Activated CD8-positive, alpha-beta T cell treated with anti-CD3 and anti-CD28 coated beads, Interleukin-2, amount 10 ng/mL, durations not matched to agents 7 days and 5 days (primary cell): ENCODE measurements at regions of chr12 and their contacts with region 1.

Region 1: GRCh38 chr12:117587631-117588287 is 226.3 kb upstream of the NOS1 start:
- DNase-seq: peak; percentile 58
- ATAC-seq: no peak
- H3K4me3 Mint-ChIP-seq: no peak overlapping the region
- H3K27ac Mint-ChIP-seq: no peak overlapping the region
- H3K4me1 Mint-ChIP-seq: no peaks in the 10 kb centered on the region
- H3K27me3 Mint-ChIP-seq: no peaks in the 10 kb centered on the region

Region 2: GRCh38 chr12:117236456-117237001 is 351.2 kb before region 1 on chr12:
- CTCF ChIA-PET with region 1: interaction called, 16 read pairs
- POLR2A ChIA-PET with region 1: no interaction called
- DNase-seq: peak; percentile 87
- ATAC-seq: peak; percentile 81
- H3K4me3 Mint-ChIP-seq: no peak overlapping the region
- H3K27ac Mint-ChIP-seq: no peak overlapping the region
- H3K4me1 Mint-ChIP-seq: no peaks in the 10 kb centered on the region
- H3K27me3 Mint-ChIP-seq: peaks cover 2% of the 10 kb centered on the region

Region 3: GRCh38 chr12:117367011-117367638 is 220.6 kb before region 1 on chr12:
- CTCF ChIA-PET with region 1: interaction called, 46 read pairs
- POLR2A ChIA-PET with region 1: no interaction called
- DNase-seq: peak; percentile 73
- ATAC-seq: no peak
- H3K4me3 Mint-ChIP-seq: no peak overlapping the region
- H3K27ac Mint-ChIP-seq: no peak overlapping the region
- H3K4me1 Mint-ChIP-seq: no peaks in the 10 kb centered on the region
- H3K27me3 Mint-ChIP-seq: peaks cover 18% of the 10 kb centered on the region